ENCODE measurements at regions of chr3 and their contacts with region 1.

Region 1: GRCh38 chr3:98022978-98023820 is 11.9 kb downstream of the GABRR3 start:
- DNase-seq: no peak
- ATAC-seq: peak; percentile 93
- H3K4me3 ChIP-seq: no peak overlapping the region
- H3K27ac ChIP-seq: no peak overlapping the region
- H3K4me1 ChIP-seq: no peaks in the 10 kb centered on the region
- H3K27me3 ChIP-seq: no peaks in the 10 kb centered on the region
- CTCF ChIP-seq: peak; percentile 85 to 94 (median 85)
- EP300 ChIP-seq: no peak
- POLR2A ChIP-seq: no peak
- RAD21 ChIP-seq: peak; percentile 100

Region 2: GRCh38 chr3:97719156-97719821 is 303.9 kb before region 1 on chr3:
- CTCF ChIA-PET with region 1: interaction called, 14 read pairs
- POLR2A ChIA-PET with region 1: no interaction called
- RAD21 ChIA-PET with region 1: interaction called, 7 read pairs
- SMC1A ChIA-PET with region 1: interaction called, 18 read pairs
- in situ Hi-C with region 1: no loop called
- intact Hi-C with region 1: loop called (anchors 1 kb)
- DNase-seq: peak; percentile 11
- ATAC-seq: peak; percentile 96
- H3K4me3 ChIP-seq: no peak overlapping the region
- H3K27ac ChIP-seq: no peak overlapping the region
- H3K4me1 ChIP-seq: no peaks in the 10 kb centered on the region
- H3K27me3 ChIP-seq: no peaks in the 10 kb centered on the region
- CTCF ChIP-seq: peak; percentile 89 to 94 (median 90)
- EP300 ChIP-seq: no peak
- POLR2A ChIP-seq: no peak
- RAD21 ChIP-seq: peak; percentile 86

Region 3: GRCh38 chr3:97804471-97804870 is 218.7 kb before region 1 on chr3:
- CTCF ChIA-PET with region 1: interaction called, 17 read pairs
- POLR2A ChIA-PET with region 1: no interaction called
- RAD21 ChIA-PET with region 1: interaction called, 5 read pairs
- SMC1A ChIA-PET with region 1: interaction called, 24 read pairs
- in situ Hi-C with region 1: no loop called
- intact Hi-C with region 1: no loop called
- DNase-seq: no peak
- ATAC-seq: no peak
- H3K4me3 ChIP-seq: no peak overlapping the region
- H3K27ac ChIP-seq: no peak overlapping the region
- H3K4me1 ChIP-seq: no peaks in the 10 kb centered on the region
- H3K27me3 ChIP-seq: no peaks in the 10 kb centered on the region
- CTCF ChIP-seq: no peak
- EP300 ChIP-seq: no peak
- POLR2A ChIP-seq: no peak
- RAD21 ChIP-seq: no peak

Region 4: DNA sequence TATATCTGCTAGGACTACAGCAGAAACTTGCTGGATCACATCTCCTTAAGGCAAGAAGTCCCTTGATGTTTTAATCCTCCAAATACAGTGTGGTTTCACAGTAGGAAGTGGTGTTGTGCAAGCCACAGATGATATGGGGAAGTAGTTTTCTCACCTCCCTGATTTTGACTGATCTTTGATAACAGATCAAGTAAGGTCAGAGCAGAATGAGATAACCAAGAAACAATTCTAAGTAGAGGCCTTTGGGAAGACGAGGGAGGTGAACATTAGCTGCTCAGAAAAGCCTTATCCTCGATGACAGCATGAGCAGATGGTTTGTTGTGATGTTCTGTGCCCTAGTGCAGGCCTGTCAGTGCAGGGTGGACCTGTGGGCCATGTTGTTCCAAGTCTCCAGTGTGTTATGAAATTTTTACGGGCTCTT is 112.3 kb before region 1 on chr3:
- CTCF ChIA-PET with region 1: no interaction called
- POLR2A ChIA-PET with region 1: no interaction called
- RAD21 ChIA-PET with region 1: no interaction called
- SMC1A ChIA-PET with region 1: no interaction called
- in situ Hi-C with region 1: no loop called
- intact Hi-C with region 1: no loop called
- DNase-seq: peak; percentile 11
- ATAC-seq: peak; percentile 15; the same call in 1 of the 3 replicates
- H3K4me3 ChIP-seq: no peak overlapping the region
- H3K27ac ChIP-seq: no peak overlapping the region
- H3K4me1 ChIP-seq: no peaks in the 10 kb centered on the region
- H3K27me3 ChIP-seq: no peaks in the 10 kb centered on the region
- CTCF ChIP-seq: no peak
- EP300 ChIP-seq: no peak
- POLR2A ChIP-seq: no peak
- RAD21 ChIP-seq: no peak

Region 5: DNA sequence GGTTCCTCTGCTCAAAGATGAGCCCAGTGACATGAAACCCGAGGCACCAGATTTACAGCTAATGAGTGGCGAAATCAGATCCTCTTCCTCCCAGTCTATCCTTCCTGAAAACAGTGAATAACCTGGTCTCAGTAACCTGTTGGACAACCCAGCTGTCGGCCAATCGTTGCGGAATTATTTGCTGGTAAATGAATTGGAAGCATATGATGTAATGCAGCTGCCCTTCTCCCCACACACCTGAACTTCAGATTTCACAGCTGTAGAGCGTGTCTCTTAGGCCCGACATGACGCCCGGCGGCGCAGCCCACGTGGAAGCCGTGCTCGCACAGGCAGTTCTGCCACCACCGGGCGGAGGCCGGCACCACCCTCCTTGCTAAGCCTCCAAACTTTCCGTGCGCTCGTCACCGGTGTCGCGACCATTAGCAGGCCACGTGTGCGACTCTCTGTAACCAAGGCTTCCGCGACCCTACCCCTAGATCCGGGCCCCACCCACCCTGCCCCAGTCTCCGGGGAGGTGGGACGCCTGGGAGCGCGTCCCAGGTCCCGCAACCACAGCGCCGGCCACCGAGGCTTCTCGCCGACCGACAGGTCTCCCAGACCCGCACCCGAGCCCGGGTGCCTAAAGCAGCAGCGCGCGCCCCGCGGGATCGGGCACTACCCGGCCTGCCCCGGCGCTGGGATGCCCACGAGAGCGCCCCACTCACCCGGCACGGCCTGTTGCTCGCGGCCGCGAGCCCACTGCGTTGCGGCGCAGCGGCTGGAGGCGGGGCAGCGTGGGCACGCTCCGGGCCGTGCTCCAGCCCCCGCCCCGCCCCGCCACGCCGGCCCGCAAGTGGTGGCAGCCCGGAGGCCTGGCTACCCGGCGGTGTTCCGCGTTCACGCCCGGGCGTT is 51.3 kb before region 1 on chr3 and contains the start of gene RIOX2:
- CTCF ChIA-PET with region 1: interaction called, 5 read pairs
- POLR2A ChIA-PET with region 1: no interaction called
- RAD21 ChIA-PET with region 1: interaction called, 3 read pairs
- SMC1A ChIA-PET with region 1: interaction called, 3 read pairs
- in situ Hi-C with region 1: no loop called
- intact Hi-C with region 1: loop called (anchors 5 kb)
- DNase-seq: peak; percentile 21
- ATAC-seq: peak; percentile 94
- H3K4me3 ChIP-seq: peak within 1 kb of the TSS; percentile 74
- H3K27ac ChIP-seq: peak within 1 kb of the TSS; percentile 59
- H3K4me1 ChIP-seq: 0 out of 2 replicates have a peak, but pooled peaks cover 3% of the 10 kb centered on the region
- H3K27me3 ChIP-seq: no peaks in the 10 kb centered on the region
- CTCF ChIP-seq: peak; percentile 7 to 22 (median 8); a peak in 2 of 6 replicates
- EP300 ChIP-seq: no peak
- POLR2A ChIP-seq: peak; percentile 85
- RAD21 ChIP-seq: no peak; the same call in 1 of the 2 replicates
- polyA plus RNA-seq, gene RIOX2: 51.8 to 52.6 TPM

Region 6: GRCh38 chr3:98039322-98040024 is 16.3 kb after region 1 on chr3:
- CTCF ChIA-PET with region 1: interaction called, 23 read pairs
- POLR2A ChIA-PET with region 1: no interaction called
- RAD21 ChIA-PET with region 1: no interaction called
- SMC1A ChIA-PET with region 1: interaction called, 15 read pairs
- in situ Hi-C with region 1: no loop called
- intact Hi-C with region 1: no loop called
- DNase-seq: peak; percentile 79
- ATAC-seq: peak; percentile 97
- H3K4me3 ChIP-seq: peak overlapping the region; percentile 66; the same call in 1 of the 2 replicates
- H3K27ac ChIP-seq: no peak overlapping the region
- H3K4me1 ChIP-seq: no peaks in the 10 kb centered on the region
- H3K27me3 ChIP-seq: no peaks in the 10 kb centered on the region; a peak in 1 of 4 replicates
- CTCF ChIP-seq: peak; percentile 61 to 95 (median 67)
- EP300 ChIP-seq: no peak
- POLR2A ChIP-seq: no peak
- RAD21 ChIP-seq: peak; percentile 86

Measured in GM12878 (cell line).